Cardiac septum (tissue), 1 donor: ENCODE measurements at regions of chr6 and their contacts with region 1.

Region 1: DNA sequence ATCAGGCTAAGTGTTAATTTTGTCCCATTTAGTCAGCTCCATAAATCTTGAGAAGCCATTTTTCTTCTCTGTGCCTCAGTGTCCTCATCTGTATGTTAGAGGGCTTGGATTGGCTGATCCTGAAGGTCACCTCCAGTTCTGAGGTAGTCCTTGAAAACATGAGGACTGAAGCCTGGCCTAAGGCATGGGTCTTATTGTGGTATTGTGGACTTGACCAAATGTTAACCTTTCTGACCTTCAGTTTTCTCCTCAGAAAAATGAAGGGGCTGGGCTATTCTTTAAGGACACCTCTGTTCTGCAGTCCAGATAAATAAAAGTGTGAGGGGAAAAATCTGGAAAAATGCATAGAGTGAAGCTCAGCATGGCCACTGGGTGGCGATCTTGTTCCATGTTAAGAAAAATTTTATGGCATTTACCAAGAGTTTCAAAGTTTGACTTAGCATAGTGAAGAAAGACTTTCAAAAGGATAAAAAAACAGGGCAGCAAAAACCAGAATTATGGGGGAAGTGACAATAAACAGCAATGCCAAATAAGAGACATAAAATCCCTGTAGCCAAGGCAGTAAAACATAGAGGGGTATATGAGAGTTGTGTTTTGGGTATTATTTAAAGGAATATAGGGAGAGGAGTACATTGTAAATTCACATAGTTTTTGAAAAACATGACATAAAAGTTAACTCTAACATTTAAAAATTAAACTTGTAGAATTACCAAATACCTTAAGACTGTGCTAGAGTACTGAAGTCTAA is 13.2 kb upstream of the TFB1M start:
- DNase-seq: no peak

Region 2: GRCh38 chr6:155273431-155273830 is 54.1 kb before region 1 on chr6:
- intact Hi-C with region 1: no loop called
- DNase-seq: no peak

Region 3: DNA sequence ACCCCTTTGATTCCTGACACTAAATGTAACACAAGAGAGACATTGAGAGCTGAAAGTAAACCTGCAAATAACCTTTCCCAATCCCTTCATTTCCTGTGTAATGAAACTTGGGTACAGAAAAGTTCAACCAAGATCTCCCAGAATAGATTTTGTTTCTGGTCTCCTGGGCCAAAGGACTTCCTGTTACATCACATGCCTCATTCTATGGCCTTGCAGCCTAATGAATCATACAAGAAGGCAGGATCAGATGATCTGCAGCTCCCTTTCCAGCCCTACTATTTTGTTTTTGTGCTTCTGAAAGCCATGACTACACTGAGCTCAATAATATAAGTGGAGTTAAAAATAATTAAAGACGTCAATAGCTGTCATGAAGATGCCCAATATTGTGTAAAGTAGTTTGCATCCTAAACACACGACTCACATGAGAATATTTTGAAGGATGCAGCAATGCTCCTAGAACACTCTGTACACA is 201.5 kb after region 1 on chr6:
- intact Hi-C with region 1: loop called (anchors 2 kb)
- DNase-seq: no peak